ENCODE measurements at regions of chr11 and their contacts with region 1.

Region 1: DNA sequence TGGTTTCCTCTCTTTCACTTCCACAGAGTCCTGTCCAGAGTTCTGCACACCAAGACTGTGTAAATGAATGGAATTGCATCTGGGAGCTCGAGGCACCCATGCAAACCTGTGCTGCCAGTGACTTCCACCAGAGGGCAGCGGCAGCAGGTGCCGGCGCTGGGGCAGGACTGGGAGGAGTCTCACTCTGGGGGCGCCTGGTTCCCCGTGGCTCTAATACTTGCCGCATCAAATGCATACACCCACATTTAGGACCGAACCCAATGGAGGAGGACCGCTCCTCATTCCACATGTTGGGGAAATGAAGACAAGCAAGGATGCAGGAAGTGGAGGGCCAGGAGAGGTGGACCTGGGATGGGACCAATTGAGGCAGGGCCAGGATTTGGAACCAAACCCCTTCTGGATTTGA is 1.1 kb upstream of the CD6 start:
- H3K4me3 ChIP-seq: no peak overlapping the region
- H3K27ac ChIP-seq: no peak overlapping the region
- H3K4me1 ChIP-seq: no peaks in the 10 kb centered on the region
- CTCF ChIP-seq: peak; percentile 53

Region 2: DNA sequence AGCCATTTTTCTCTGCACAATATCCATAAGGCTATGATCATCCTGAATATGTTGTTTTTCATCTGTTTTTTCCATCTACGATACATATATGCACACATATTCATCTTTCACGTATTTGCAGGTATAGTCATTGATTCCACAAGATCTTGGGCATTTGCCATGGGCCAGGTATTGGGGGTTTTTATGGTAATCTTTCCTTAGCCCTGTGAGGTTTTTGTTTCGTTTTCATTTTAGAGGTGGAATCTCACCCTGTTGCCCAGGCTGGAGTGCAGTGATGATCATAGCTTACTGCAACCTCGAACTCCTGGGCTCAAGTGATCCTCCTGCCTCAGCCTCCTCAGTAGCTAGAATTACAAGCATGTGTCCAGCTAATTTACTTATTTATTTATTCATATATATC is 21.1 kb after region 1 on chr11:
- CTCF ChIA-PET with region 1: interaction called, 10 read pairs
- POLR2A ChIA-PET with region 1: no interaction called
- H3K4me3 ChIP-seq: no peak overlapping the region
- H3K27ac ChIP-seq: no peak overlapping the region
- H3K4me1 ChIP-seq: no peaks in the 10 kb centered on the region
- CTCF ChIP-seq: no peak

Region 3: GRCh38 chr11:61021661-61022212 is 51.4 kb after region 1 on chr11:
- CTCF ChIA-PET with region 1: no interaction called
- POLR2A ChIA-PET with region 1: no interaction called
- H3K4me3 ChIP-seq: no peak overlapping the region
- H3K27ac ChIP-seq: no peak overlapping the region
- H3K4me1 ChIP-seq: no peaks in the 10 kb centered on the region
- CTCF ChIP-seq: no peak